Transverse colon (tissue), 4 donors: ENCODE measurements at regions of chr20 and their contacts with region 1.

Region 1: DNA sequence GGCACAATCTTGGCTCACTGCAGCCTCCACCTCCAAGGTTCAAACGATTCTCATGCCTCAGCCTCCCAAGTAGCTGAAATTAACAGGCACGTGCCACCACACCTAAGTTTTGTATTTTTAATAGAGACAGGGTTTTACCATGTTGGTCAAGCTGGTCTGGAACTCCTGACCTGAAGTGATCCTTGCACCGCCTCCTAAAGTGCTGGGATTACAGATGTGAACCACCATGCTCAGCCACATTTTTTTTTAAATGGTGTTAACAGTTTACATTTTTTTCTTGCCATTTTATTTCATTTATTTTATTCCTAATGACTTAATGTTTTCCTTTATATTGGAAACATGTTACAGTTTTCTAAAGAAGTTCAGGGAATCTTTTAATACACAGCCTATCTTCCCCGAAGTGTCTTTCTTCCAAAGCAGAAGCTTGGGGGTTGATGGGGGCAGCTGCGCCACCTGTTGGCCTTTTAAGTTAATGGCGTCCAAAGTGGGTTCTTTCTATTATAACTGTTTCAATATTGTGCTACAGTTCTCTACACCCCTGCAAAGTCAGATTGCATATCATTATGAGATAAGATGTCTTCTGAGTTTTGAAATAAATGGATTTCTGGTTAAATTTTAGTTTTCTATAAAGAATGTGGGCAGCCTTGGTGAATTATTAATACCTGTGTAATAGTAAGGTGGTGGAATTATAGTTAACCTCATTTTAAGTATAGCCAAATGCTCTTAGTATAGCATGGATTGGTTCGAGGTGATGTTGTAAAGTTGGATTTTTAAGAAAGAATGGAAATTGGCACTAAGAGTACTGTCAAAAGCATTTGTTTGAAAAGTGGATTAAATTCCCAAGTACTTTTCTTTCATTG is 42.0 kb upstream of the PLCG1 start:
- DNase-seq: peak; percentile 69
- H3K4me3 ChIP-seq: no peak overlapping the region
- H3K27ac ChIP-seq: no peak overlapping the region
- H3K4me1 ChIP-seq: peaks cover 0 to 9% (median 0%) of the 10 kb centered on the region in 4 donors
- H3K27me3 ChIP-seq: no peaks in the 10 kb centered on the region
- CTCF ChIP-seq: peak; percentile 77 to 90 (median 86)
- EP300 ChIP-seq: no peak
- POLR2A ChIP-seq: no peak

Region 2: GRCh38 chr20:40587042-40587441 is 508.3 kb before region 1 on chr20:
- in situ Hi-C with region 1: no loop called
- intact Hi-C with region 1: no loop called
- DNase-seq: no peak
- H3K4me3 ChIP-seq: no peak overlapping the region
- H3K27ac ChIP-seq: no peak overlapping the region
- H3K4me1 ChIP-seq: peaks cover 0 to 9% (median 3%) of the 10 kb centered on the region in 4 donors
- H3K27me3 ChIP-seq: peaks cover 13% of the 10 kb centered on the region
- CTCF ChIP-seq: no peak
- EP300 ChIP-seq: no peak
- POLR2A ChIP-seq: no peak

Region 3: GRCh38 chr20:40970201-40970600 is 125.1 kb before region 1 on chr20:
- in situ Hi-C with region 1: loop called in 3 of 4 experiments (anchors 5 to 10 kb)
- intact Hi-C with region 1: no loop called
- DNase-seq: no peak
- H3K4me3 ChIP-seq: no peak overlapping the region
- H3K27ac ChIP-seq: no peak overlapping the region
- H3K4me1 ChIP-seq: peaks cover 0 to 7% (median 2%) of the 10 kb centered on the region in 4 donors
- H3K27me3 ChIP-seq: no peaks in the 10 kb centered on the region
- CTCF ChIP-seq: no peak
- EP300 ChIP-seq: no peak
- POLR2A ChIP-seq: no peak

Region 4: GRCh38 chr20:40980106-40980827 is 115.1 kb before region 1 on chr20:
- in situ Hi-C with region 1: loop called in 2 of 4 experiments (anchors 10 kb)
- intact Hi-C with region 1: no loop called
- DNase-seq: no peak
- H3K4me3 ChIP-seq: no peak overlapping the region
- H3K27ac ChIP-seq: no peak overlapping the region
- H3K4me1 ChIP-seq: no peaks in the 10 kb centered on the region
- H3K27me3 ChIP-seq: no peaks in the 10 kb centered on the region
- CTCF ChIP-seq: no peak
- EP300 ChIP-seq: no peak
- POLR2A ChIP-seq: no peak